A549 (cell line): ENCODE measurements at regions of chr5 and their contacts with region 1.

Region 1: DNA sequence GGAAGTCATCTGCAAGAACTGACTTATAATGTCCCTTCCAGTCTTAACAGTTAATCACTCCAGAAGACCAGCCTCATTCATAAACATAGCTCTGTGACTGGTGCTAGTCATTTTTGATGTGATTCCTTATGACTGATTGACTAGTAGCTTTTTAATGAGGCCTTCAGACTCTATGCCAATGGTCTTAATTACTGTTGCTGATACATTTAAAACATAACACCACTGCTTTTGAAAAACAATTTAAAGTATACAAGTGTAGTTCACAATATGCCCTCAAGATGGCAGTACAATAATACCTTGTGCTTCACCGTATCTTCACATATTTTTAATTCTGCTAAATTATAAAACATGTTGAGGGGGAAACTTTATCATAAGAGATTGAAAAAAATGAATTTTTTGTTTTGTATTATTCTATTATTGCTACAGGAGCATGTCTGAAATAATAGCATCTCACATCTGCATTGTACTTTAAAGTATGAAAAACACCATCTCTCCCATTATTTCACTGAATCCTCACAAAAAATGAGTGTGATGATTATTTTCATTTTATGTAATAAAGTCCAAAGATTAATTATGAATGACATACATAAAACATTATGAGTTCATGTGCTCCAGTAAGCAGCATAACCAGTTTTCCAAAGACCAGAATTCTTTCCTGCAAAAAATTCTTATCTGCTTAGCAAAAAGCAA is 55.2 kb upstream of the SHISAL2B start:
- DNase-seq: peak; percentile 7 to 23
- ATAC-seq: peak in 1 of 2 experiments; percentile 40; a peak in 1 of 6 replicates
- H3K4me3 ChIP-seq: no peak overlapping the region
- H3K27ac ChIP-seq: no peak overlapping the region
- H3K4me1 ChIP-seq: no peaks in the 10 kb centered on the region
- CTCF ChIP-seq: peak; percentile 88
- EP300 ChIP-seq: no peak
- POLR2A ChIP-seq: no peak
- RAD21 ChIP-seq: peak; percentile 84 to 85

Region 2: GRCh38 chr5:64646169-64646568 is 11.0 kb after region 1 on chr5:
- CTCF ChIA-PET with region 1: interaction called, 13 read pairs
- POLR2A ChIA-PET with region 1: no interaction called
- DNase-seq: no peak
- ATAC-seq: no peak
- H3K4me3 ChIP-seq: no peak overlapping the region
- H3K27ac ChIP-seq: no peak overlapping the region
- H3K4me1 ChIP-seq: no peaks in the 10 kb centered on the region
- CTCF ChIP-seq: no peak
- EP300 ChIP-seq: no peak
- POLR2A ChIP-seq: no peak
- RAD21 ChIP-seq: no peak

Region 3: DNA sequence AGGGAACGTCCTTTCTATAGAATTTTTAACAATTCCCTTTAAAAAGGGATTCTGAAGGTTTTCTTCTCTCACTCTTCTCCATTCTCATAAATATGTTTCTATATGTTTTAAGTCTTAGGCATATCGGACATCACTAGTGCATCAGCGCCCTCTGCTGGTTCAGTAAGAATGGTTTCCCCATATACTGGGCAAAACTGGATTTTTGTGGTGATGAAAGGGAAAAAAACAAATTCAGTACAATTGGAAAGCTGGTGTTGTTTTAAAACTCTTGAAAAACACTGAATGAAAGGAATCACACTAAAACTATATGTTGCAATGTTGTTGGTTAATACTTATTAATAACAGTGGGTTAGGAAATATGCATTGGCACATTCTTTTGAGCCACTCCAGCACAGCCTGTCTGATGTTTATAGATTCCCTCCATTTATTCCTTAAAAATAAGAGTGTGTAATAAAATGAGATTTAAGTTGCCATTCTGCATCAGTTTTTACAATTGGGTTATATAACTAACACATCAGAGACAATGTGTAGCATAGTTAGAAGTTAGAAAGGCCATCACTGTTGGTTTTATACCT is 149.4 kb after region 1 on chr5:
- CTCF ChIA-PET with region 1: interaction called, 54 read pairs
- POLR2A ChIA-PET with region 1: no interaction called
- DNase-seq: peak; percentile 12 to 83
- ATAC-seq: peak; percentile 81 to 90
- H3K4me3 ChIP-seq: no peak overlapping the region
- H3K27ac ChIP-seq: no peak overlapping the region
- H3K4me1 ChIP-seq: no peaks in the 10 kb centered on the region
- CTCF ChIP-seq: peak; percentile 94
- EP300 ChIP-seq: no peak
- POLR2A ChIP-seq: no peak
- RAD21 ChIP-seq: peak; percentile 85 to 86

Region 4: GRCh38 chr5:64854855-64855254 is 219.7 kb after region 1 on chr5:
- CTCF ChIA-PET with region 1: no interaction called
- POLR2A ChIA-PET with region 1: no interaction called
- DNase-seq: no peak
- ATAC-seq: no peak
- H3K4me3 ChIP-seq: no peak overlapping the region
- H3K27ac ChIP-seq: no peak overlapping the region
- H3K4me1 ChIP-seq: no peaks in the 10 kb centered on the region
- CTCF ChIP-seq: no peak
- EP300 ChIP-seq: no peak
- POLR2A ChIP-seq: no peak
- RAD21 ChIP-seq: no peak